Panc1 (cell line): ENCODE measurements at regions of chr3 and their contacts with region 1.

Region 1: GRCh38 chr3:122679085-122679881 is 1.4 kb upstream of the PARP14 start:
- DNase-seq: peak; percentile 75
- ATAC-seq: peak; percentile 80
- H3K4me3 ChIP-seq: peak overlapping the region; percentile 81 to 82
- H3K27ac ChIP-seq: peak overlapping the region; percentile 94
- H3K4me1 ChIP-seq: peaks cover 31% of the 10 kb centered on the region
- H3K27me3 ChIP-seq: no peaks in the 10 kb centered on the region
- CTCF ChIP-seq: peak; percentile 92

Region 2: DNA sequence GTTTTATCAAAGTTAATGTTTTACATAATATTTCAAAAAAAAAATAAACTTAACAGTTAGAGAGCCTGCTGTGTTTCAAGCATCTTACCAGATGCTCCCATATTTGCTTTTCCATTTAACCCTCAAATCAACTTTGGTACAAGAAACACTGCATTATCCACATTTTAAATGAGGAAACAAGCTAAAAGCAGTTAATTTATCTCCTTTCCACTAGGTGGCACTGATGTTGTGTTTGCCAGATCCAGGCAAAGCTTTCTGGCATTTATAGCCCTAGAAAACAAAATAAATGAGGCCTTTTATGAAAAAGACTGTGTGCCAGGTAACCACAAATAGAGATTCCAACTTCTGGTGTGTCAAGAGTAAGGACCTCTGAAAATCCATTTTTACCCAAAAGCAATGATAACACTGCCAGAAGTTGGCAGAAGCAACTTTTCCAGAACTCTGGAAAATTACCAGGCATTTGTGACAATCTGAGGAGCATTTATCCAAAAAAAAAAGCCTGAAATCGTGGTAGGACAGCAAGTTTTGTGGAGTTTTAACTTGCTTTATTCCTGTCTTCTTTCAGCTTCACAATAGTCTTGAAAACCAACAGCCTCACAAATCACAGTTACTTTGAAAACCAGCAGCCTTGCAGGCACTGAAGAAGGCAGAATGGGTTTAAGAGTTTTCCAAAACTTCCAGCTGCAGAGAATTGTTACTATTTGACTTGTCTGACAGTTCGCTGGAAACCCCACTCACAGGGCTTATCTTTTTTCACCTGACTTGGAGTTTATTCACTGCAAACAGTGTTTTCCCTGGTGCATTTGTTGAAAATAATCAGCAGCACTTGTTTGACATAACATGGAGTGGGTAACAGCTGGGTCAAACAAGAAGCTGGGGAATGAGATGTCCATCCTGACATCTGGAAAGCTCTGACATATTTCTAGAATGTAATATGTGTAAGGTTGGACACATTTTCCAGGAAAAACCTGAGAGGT is 286.1 kb before region 1 on chr3:
- CTCF ChIA-PET with region 1: interaction called, 5 read pairs
- POLR2A ChIA-PET with region 1: no interaction called
- in situ Hi-C with region 1: no loop called
- intact Hi-C with region 1: loop called (anchors 2 kb)
- DNase-seq: no peak
- ATAC-seq: 0 out of 2 replicates have a peak, but pooled peaks have one; percentile 53
- H3K4me3 ChIP-seq: no peak overlapping the region
- H3K27ac ChIP-seq: no peak overlapping the region
- H3K4me1 ChIP-seq: no peaks in the 10 kb centered on the region; the same call in 1 of the 2 replicates
- H3K27me3 ChIP-seq: no peaks in the 10 kb centered on the region
- CTCF ChIP-seq: peak; percentile 84

Region 3: GRCh38 chr3:122458992-122459391 is 220.3 kb before region 1 on chr3:
- CTCF ChIA-PET with region 1: no interaction called
- POLR2A ChIA-PET with region 1: no interaction called
- in situ Hi-C with region 1: no loop called
- intact Hi-C with region 1: loop called (anchors 2 kb)
- DNase-seq: no peak
- ATAC-seq: peak; percentile 65; the same call in 1 of the 2 replicates
- H3K4me3 ChIP-seq: no peak overlapping the region
- H3K27ac ChIP-seq: no peak overlapping the region
- H3K4me1 ChIP-seq: no peaks in the 10 kb centered on the region
- H3K27me3 ChIP-seq: no peaks in the 10 kb centered on the region
- CTCF ChIP-seq: peak; percentile 65; the same call in 1 of the 2 replicates

Region 4: GRCh38 chr3:122533931-122534334 is 145.3 kb before region 1 on chr3:
- CTCF ChIA-PET with region 1: no interaction called
- POLR2A ChIA-PET with region 1: interaction called, 16 read pairs
- in situ Hi-C with region 1: no loop called
- intact Hi-C with region 1: no loop called
- DNase-seq: peak; percentile 76
- ATAC-seq: peak; percentile 100
- H3K4me3 ChIP-seq: no peak overlapping the region
- H3K27ac ChIP-seq: no peak overlapping the region
- H3K4me1 ChIP-seq: peaks cover 4% of the 10 kb centered on the region; the same call in 1 of the 2 replicates
- H3K27me3 ChIP-seq: no peaks in the 10 kb centered on the region
- CTCF ChIP-seq: no peak

Region 5: DNA sequence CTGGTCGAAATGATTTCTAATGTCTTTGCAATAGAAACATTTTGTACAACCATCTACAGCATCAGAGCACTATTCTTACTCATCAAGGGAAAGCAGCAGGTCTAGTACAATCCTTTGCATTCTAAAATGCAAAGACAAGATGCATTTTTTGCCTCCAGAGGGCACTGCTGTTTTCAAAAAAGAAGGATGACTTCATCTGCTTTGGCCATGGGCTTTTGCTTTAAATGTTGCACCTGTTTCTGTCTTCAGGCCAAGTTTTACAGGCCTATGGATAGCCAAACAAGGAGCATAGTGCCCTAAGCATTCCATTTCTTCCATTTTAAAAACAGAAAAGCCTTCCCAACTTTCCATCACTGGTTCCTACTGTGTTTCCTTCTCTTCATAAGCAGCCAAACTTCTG is 118.6 kb before region 1 on chr3:
- CTCF ChIA-PET with region 1: interaction called, 7 read pairs
- POLR2A ChIA-PET with region 1: no interaction called
- in situ Hi-C with region 1: no loop called
- intact Hi-C with region 1: loop called (anchors 1 kb)
- DNase-seq: peak; percentile 62
- ATAC-seq: peak; percentile 44
- H3K4me3 ChIP-seq: no peak overlapping the region
- H3K27ac ChIP-seq: no peak overlapping the region
- H3K4me1 ChIP-seq: peaks cover 3% of the 10 kb centered on the region; the same call in 1 of the 2 replicates
- H3K27me3 ChIP-seq: no peaks in the 10 kb centered on the region
- CTCF ChIP-seq: peak; percentile 80